Motor neuron (in vitro differentiated cells): ENCODE measurements at regions of chr20 and their contacts with region 1.

Region 1: GRCh38 chr20:4750381-4750780 is 28.7 kb downstream of the PRND start:
- ATAC-seq: no peak
- H3K4me3 ChIP-seq: no peak overlapping the region
- H3K27ac ChIP-seq: no peak overlapping the region
- H3K4me1 ChIP-seq: no peaks in the 10 kb centered on the region

Region 2: DNA sequence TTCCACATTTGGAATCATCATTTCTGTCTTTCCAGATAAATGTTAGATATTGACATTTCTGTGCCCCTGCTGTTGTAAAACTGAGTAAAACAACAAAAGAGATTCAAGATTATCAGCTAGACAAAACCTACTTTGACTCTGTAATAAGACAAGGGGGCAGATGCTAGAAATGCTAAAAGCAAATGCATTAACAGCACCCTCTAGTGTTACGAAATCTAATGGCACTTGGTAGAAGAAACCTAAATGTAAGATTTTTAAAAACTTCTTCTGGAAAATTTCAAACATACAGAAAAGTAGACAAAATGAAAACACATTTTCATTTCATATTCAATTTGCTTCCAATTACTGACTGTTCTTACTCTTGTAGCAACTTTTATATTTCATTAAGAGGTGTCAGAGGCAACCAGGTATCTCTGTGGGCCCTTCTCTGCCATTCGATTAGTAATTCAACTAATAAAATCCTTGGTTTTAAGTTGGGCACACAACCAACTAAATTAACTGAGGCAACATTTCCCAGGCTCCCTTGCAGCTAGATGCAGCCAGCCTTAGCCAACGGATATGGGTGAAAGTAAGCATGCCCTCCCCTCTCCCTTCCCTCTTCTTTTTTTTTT is 205.9 kb after region 1 on chr20:
- in situ Hi-C with region 1: loop called in 1 of 9 experiments (anchors 10 kb)
- ATAC-seq: peak in 3 of 8 experiments; percentile 33 to 55 (median 41)
- H3K4me3 ChIP-seq: no peak overlapping the region
- H3K27ac ChIP-seq: no peak overlapping the region
- H3K4me1 ChIP-seq: no peaks in the 10 kb centered on the region